ENCODE measurements at regions of chr2 and their contacts with region 1.

Region 1: DNA sequence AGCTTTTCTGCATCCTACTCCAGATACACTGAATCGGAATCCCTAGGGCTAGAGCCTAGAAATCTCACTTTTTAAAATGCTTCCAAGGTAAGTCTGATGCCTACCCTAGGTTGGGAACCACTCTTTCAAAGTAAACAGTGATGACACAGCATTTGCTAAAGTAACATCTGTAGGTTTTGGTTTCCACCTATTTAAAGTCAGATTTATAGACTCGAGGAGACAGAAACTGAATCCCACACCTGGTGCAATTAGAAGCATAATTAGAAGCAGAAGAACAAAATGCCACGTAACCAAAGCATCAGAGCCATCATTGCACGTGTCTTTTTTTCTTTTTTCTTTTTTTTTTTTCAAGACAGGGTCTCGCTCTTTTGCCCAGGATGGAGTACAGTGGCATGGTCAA is 40.9 kb downstream of the PDK1 start:
- DNase-seq: no peak
- ATAC-seq: no peak
- H3K4me3 ChIP-seq: no peak overlapping the region
- H3K27ac ChIP-seq: no peak overlapping the region
- H3K4me1 ChIP-seq: peaks cover 0 to 26% (median 3%) of the 10 kb centered on the region in 12 donors
- H3K27me3 ChIP-seq: no peaks in the 10 kb centered on the region
- CTCF ChIP-seq: no peak
- POLR2A ChIP-seq: no peak

Region 2: DNA sequence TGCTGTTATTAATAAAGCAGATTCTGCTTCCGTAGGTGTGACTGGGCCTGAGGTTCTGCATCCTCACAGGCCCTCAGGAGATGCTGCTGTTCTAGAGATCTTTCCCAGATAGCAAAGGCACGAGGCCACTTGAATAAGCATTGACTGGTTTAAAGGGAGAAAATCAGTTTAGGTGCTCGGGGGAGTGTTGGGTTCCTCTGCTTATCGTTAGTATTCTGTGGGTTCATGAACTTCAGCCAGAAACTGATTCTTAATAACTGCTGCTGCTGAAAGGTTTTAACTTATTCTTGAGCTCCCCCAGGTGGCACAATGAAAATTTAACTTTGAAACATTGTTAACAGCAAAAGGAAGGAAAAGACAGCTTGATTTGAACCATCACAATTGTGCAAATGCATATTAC is 112.5 kb before region 1 on chr2:
- intact Hi-C with region 1: no loop called
- DNase-seq: no peak
- ATAC-seq: no peak
- H3K4me3 ChIP-seq: no peak overlapping the region
- H3K27ac ChIP-seq: no peak overlapping the region
- H3K4me1 ChIP-seq: peaks cover 0 to 26% (median 14%) of the 10 kb centered on the region in 12 donors
- H3K27me3 ChIP-seq: no peaks in the 10 kb centered on the region
- CTCF ChIP-seq: peak in 9 of 12 donors; percentile 23 to 43 (median 30)
- POLR2A ChIP-seq: no peak

Region 3: DNA sequence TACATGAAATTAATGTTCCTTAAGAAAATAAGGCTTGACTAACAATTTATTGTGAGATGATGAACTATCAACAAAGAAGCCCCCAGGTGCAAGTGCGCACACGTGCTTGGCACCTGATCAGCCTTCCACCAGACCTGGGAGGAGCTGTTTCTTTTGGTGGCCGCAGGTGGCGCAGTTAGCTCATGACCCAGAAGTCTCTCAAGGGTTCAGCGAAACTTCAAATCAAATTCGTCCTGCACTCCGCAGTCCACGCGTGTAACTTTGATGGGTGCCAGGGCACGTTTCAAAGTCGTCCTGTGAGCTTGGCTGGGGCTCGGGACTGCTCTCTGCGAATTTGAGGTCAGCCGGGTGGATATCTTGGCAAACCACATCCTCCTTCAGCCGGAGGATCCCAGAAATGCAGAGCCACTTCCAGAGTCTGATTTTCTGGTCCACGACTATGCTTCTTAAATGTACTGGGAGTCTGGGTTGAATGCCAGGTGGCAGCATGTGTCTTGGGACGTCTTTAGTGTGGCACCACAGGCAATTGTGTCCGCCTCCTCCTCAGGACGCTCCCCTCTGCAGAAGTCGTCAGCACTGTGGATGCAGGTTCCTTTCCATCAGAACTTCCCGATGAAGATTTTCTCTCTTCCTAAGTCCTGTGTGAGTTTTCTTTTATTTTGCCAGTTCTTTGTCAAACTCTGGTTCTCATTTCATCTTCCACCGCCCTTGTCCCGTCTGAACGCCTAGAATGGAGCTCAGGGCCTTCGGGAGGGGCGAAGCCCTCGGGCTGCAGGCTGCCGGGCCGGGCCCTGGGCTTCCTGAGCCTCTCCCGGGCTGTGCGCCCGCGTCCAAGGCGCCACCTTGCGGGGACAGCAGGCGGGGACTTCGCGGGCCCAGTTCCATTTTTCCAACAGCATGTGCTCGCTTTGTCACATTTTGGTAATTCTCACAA is 77.5 kb after region 1 on chr2:
- intact Hi-C with region 1: loop called in 7 of 10 experiments (anchors 5 to 10 kb)
- DNase-seq: peak in 4 of 5 donors; percentile 31 to 45 (median 36)
- ATAC-seq: peak in 3 of 4 donors; percentile 58 to 78 (median 72)
- H3K4me3 ChIP-seq: peak overlapping the region in 5 of 12 donors; percentile 8 to 33 (median 20)
- H3K27ac ChIP-seq: no peak overlapping the region
- H3K4me1 ChIP-seq: peaks cover 0 to 4% (median 0%) of the 10 kb centered on the region in 12 donors
- H3K27me3 ChIP-seq: no peaks in the 10 kb centered on the region
- CTCF ChIP-seq: peak; percentile 41 to 77 (median 52)
- POLR2A ChIP-seq: no peak

Region 4: GRCh38 chr2:172704072-172704936 is 107.5 kb after region 1 on chr2:
- intact Hi-C with region 1: loop called in 9 of 10 experiments (anchors 5 to 10 kb)
- DNase-seq: no peak
- ATAC-seq: peak in 3 of 4 donors; percentile 52 to 67 (median 54)
- H3K4me3 ChIP-seq: no peak overlapping the region
- H3K27ac ChIP-seq: no peak overlapping the region
- H3K4me1 ChIP-seq: no peaks in the 10 kb centered on the region
- H3K27me3 ChIP-seq: peaks cover 0 to 6% (median 0%) of the 10 kb centered on the region in 9 donors
- CTCF ChIP-seq: peak; percentile 38 to 67 (median 48)
- POLR2A ChIP-seq: no peak

Region 5: GRCh38 chr2:172710584-172711024 is 113.8 kb after region 1 on chr2:
- intact Hi-C with region 1: loop called in 9 of 10 experiments (anchors 2 to 10 kb)
- DNase-seq: peak in 1 of 5 donors; percentile 35
- ATAC-seq: peak; percentile 78 to 84 (median 82)
- H3K4me3 ChIP-seq: no peak overlapping the region
- H3K27ac ChIP-seq: peak overlapping the region in 9 of 12 donors; percentile 24 to 65 (median 53)
- H3K4me1 ChIP-seq: peaks cover 0 to 18% (median 3%) of the 10 kb centered on the region in 12 donors
- H3K27me3 ChIP-seq: peaks cover 0 to 6% (median 0%) of the 10 kb centered on the region in 9 donors
- CTCF ChIP-seq: peak; percentile 34 to 74 (median 56)
- POLR2A ChIP-seq: no peak

Measured in heart left ventricle (tissue), 16 donors.